ENCODE measurements at regions of chr18 and their contacts with region 1.

Region 1: DNA sequence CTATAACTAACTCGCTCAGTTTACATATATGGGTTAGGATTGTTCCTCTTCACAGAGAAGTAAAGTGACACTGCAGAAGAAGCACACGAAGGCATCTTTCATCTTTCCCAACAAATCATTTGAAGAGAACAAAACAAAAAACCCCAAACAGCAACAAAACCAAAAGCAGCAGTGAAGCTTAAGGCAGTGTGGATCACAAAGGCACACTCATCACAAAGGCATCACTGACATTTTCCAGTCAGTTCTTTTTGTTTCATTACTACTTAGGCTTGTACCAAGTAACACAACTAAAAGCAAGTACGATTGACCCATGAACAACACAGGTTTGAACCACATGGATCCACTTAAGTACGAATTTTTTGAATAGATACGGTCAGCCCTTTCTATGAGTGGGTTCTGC is 75.7 kb downstream of the RNF152 start:
- DNase-seq: no peak
- H3K4me3 ChIP-seq: no peak overlapping the region
- H3K27ac ChIP-seq: no peak overlapping the region
- H3K4me1 ChIP-seq: no peaks in the 10 kb centered on the region
- H3K27me3 ChIP-seq: no peaks in the 10 kb centered on the region
- CTCF ChIP-seq: no peak
- EP300 ChIP-seq: no peak
- POLR2A ChIP-seq: no peak

Region 2: GRCh38 chr18:63037491-63037890 is 1220.4 kb after region 1 on chr18:
- intact Hi-C with region 1: loop called in 1 of 4 experiments (anchors 5 kb)
- DNase-seq: no peak
- H3K4me3 ChIP-seq: no peak overlapping the region
- H3K27ac ChIP-seq: no peak overlapping the region
- H3K4me1 ChIP-seq: no peaks in the 10 kb centered on the region
- H3K27me3 ChIP-seq: no peaks in the 10 kb centered on the region
- CTCF ChIP-seq: no peak
- EP300 ChIP-seq: no peak
- POLR2A ChIP-seq: no peak

Measured in ovary (tissue), 10 donors.